ENCODE measurements at regions of chr19 and their contacts with region 1.

Region 1: DNA sequence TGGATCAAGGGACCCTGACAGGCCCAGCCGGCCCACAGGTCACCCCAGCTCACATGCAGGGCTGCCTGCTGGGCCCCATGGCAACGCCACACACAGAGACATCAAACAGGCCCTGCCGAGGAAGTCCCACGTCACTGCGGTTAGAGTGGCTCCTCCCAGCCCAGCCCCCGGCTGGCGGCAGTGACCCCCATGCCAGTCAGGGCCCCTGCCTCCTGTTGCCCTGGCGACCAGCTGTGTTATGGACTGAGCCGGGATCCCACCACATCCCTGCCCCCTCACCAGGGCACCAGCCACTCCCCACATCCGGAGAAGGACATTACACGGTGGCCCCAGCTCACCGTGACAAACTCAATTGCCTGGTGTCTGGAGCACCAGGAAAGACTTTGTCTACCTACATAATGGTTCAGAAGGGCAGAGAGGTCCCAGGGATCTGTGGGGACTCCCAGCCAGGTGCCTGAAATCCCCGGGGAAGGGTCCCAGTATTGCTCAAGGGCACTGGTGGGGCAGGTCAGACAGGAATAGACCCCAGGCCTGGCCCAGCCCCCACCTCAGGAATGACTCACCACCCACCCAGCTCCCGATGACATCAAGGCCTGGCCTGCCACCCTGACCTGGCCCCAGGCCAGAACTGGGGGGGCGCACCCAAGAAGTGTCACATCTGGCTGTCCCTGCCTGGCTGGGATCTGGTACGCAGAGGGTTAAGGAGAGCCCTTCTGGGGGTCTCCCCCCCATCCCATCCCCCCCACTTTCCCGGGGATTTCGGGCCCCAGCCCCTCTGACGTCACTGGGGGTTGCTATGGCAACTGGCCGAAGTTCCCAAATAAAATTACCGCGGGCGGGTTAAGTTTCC is 30.2 kb upstream of the NANOS3 start:
- DNase-seq: peak; percentile 93
- ATAC-seq: peak; percentile 53
- H3K4me3 Mint-ChIP-seq: peak overlapping the region; percentile 78
- H3K27ac Mint-ChIP-seq: peak overlapping the region; percentile 96
- H3K4me1 Mint-ChIP-seq: peaks cover 35% of the 10 kb centered on the region
- H3K27me3 Mint-ChIP-seq: no peaks in the 10 kb centered on the region

Region 2: DNA sequence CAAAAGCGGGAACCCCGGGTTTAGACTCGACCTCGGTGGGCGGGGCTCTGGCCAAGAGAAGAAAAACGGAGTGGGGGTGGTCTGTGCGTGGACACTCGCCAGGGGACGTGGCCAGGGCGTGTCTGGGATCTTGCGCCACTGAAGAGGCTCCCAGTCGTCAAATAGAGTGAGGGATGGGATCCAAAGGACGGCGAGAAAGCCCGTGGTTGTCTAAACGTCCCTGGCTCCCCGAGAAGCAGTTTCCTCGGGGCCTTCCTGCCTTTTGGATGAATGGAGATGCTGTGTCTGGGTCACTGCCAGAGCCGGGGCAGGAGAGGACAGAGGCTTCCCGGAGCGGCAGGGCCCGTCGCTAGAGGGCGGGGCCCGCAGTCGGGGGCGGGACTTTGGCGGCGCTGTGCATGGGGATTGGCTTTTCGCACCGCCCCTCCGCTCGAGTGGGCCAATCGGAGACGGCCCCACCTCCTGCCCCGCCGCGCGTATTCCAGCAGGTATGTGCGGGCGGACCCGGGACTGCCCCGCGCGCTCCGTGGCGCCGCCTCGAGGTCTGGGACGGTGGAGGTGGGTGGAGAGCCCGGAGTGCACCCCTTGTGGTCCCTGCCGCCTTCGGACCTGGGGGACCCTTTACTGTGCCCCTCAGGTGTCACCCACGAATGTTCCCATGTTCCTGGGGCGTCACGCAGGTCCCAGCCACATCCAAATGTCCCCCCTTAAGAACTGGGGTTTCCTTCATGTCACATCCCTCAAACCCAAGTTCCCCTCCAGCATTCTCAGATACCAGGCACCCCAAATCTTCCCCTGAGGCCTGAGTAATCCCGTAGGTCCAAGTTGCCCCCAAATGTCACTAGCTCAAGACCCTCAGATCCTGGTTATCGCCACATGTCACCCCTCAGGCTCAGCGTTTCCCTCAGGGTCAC is 13.2 kb before region 1 on chr19:
- POLR2A ChIA-PET with region 1: interaction called, 203 read pairs
- DNase-seq: peak; percentile 96
- ATAC-seq: peak; percentile 69
- H3K4me3 Mint-ChIP-seq: peak overlapping the region; percentile 88
- H3K27ac Mint-ChIP-seq: peak overlapping the region; percentile 83
- H3K4me1 Mint-ChIP-seq: peaks cover 28% of the 10 kb centered on the region
- H3K27me3 Mint-ChIP-seq: no peaks in the 10 kb centered on the region